Naive thymus-derived CD4-positive, alpha-beta T cell (primary cell): ENCODE measurements at regions of chr19 and their contacts with region 1.

Region 1: GRCh38 chr19:44051654-44052402 is at the start of gene ZNF223:
- DNase-seq: peak in 8 of 9 donors; percentile 14 to 52 (median 40)
- ATAC-seq: peak; percentile 85
- H3K4me3 ChIP-seq: peak within 1 kb of the TSS; percentile 58
- H3K4me3 Mint-ChIP-seq: peak within 1 kb of the TSS; percentile 71 to 98 (median 96)
- H3K27ac ChIP-seq: peak within 1 kb of the TSS; percentile 53
- H3K27ac Mint-ChIP-seq: peak within 1 kb of the TSS in 8 of 9 donors; percentile 36 to 91 (median 82)
- H3K4me1 ChIP-seq: no peaks in the 10 kb centered on the region
- H3K4me1 Mint-ChIP-seq: peaks cover 7 to 36% (median 28%) of the 10 kb centered on the region in 7 donors
- H3K27me3 ChIP-seq: no peaks in the 10 kb centered on the region
- H3K27me3 Mint-ChIP-seq: peaks cover 0 to 22% (median 13%) of the 10 kb centered on the region in 5 donors
- total RNA-seq, gene ZNF223: 0.15 to 8.7 (median 2.3) TPM

Region 2: GRCh38 chr19:43983912-43984686 is 67.7 kb before region 1 on chr19 and contains the start of gene ZNF155:
- CTCF ChIA-PET with region 1: no interaction called
- POLR2A ChIA-PET with region 1: interaction called, 3 read pairs
- intact Hi-C with region 1: loop called in 1 of 2 experiments (anchors 1 kb)
- DNase-seq: peak; percentile 46 to 72 (median 64)
- ATAC-seq: peak; percentile 92
- H3K4me3 ChIP-seq: peak within 1 kb of the TSS; percentile 96
- H3K4me3 Mint-ChIP-seq: peak within 1 kb of the TSS; percentile 89 to 99 (median 96)
- H3K27ac ChIP-seq: peak within 1 kb of the TSS; percentile 79
- H3K27ac Mint-ChIP-seq: peak within 1 kb of the TSS; percentile 72 to 97 (median 93)
- H3K4me1 ChIP-seq: peaks cover 0 to 3% of the 10 kb centered on the region in 2 donors
- H3K4me1 Mint-ChIP-seq: peaks cover 0 to 28% (median 14%) of the 10 kb centered on the region in 7 donors
- H3K27me3 ChIP-seq: no peaks in the 10 kb centered on the region
- H3K27me3 Mint-ChIP-seq: no peaks in the 10 kb centered on the region
- total RNA-seq, gene ZNF155: 5.2 to 13.3 (median 9.1) TPM

Region 3: GRCh38 chr19:44025217-44025936 is 26.5 kb before region 1 on chr19 and contains the start of gene ZNF222:
- CTCF ChIA-PET with region 1: no interaction called
- POLR2A ChIA-PET with region 1: interaction called, 5 read pairs
- intact Hi-C with region 1: loop called in 1 of 2 experiments (anchors 1 kb)
- DNase-seq: peak; percentile 41 to 78 (median 66)
- ATAC-seq: peak; percentile 99
- H3K4me3 ChIP-seq: peak within 1 kb of the TSS; percentile 76
- H3K4me3 Mint-ChIP-seq: peak within 1 kb of the TSS; percentile 95 to 100 (median 98)
- H3K27ac ChIP-seq: peak within 1 kb of the TSS; percentile 71
- H3K27ac Mint-ChIP-seq: peak within 1 kb of the TSS; percentile 84 to 98 (median 94)
- H3K4me1 ChIP-seq: peaks cover 5 to 9% of the 10 kb centered on the region in 2 donors
- H3K4me1 Mint-ChIP-seq: peaks cover 12 to 40% (median 31%) of the 10 kb centered on the region in 7 donors
- H3K27me3 ChIP-seq: no peaks in the 10 kb centered on the region
- H3K27me3 Mint-ChIP-seq: peaks cover 0 to 9% (median 3%) of the 10 kb centered on the region in 5 donors
- total RNA-seq, gene ZNF222: 2.9 to 10.1 (median 4.5) TPM

Region 4: DNA sequence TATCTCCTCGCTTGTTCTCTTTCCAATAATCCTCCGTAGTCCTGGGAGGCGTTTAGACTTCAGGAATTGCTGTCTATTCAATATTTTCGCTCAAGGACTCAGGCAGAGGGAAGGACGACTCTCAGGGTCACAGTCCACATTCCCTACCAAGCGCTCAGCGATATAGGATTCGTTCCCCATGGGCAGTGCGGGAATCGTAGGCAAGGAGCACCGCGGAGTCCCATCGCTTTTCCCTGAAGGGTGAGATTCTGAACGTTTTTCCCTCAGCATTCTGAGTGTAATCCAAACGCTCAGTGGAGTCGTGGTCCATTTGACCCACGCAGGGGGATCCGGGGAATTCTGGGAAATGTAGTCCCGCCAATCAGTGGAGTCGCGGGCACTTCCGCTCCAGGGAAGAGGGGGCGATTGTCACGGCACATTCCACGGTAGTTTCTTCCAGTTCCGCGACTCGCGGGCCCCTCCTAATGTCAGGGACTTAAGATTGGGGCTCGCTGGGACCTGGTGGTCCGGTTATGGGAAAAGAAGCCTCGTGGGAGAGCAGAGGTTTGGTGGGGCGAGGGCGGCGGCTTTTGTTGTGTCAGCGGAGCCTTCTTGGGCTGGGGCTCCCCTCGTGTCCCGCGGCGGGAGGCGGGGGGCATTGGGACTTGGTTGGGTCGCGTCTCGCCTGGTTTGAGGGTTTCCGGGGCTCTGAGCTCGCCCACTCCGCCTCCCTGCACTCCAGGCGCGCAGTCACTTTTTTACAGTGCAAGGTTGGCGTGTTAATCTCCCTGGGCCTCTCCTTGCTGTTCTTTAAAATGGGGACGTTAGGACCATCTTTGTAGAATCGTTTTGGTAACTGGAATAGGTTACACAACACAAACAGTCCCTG is 89.6 kb after region 1 on chr19 and contains the start of gene ZNF234:
- CTCF ChIA-PET with region 1: no interaction called
- POLR2A ChIA-PET with region 1: interaction called, 4 read pairs
- intact Hi-C with region 1: loop called in 1 of 2 experiments (anchors 1 kb)
- DNase-seq: peak; percentile 29 to 69 (median 56)
- ATAC-seq: peak; percentile 92
- H3K4me3 ChIP-seq: peak within 1 kb of the TSS; percentile 80
- H3K4me3 Mint-ChIP-seq: peak within 1 kb of the TSS; percentile 90 to 97 (median 96)
- H3K27ac ChIP-seq: peak within 1 kb of the TSS; percentile 77
- H3K27ac Mint-ChIP-seq: peak within 1 kb of the TSS; percentile 64 to 94 (median 88)
- H3K4me1 ChIP-seq: peaks cover 0 to 12% of the 10 kb centered on the region in 2 donors
- H3K4me1 Mint-ChIP-seq: peaks cover 14 to 30% (median 25%) of the 10 kb centered on the region in 7 donors
- H3K27me3 ChIP-seq: no peaks in the 10 kb centered on the region
- H3K27me3 Mint-ChIP-seq: no peaks in the 10 kb centered on the region
- total RNA-seq, gene ZNF234: 2.8 to 25.2 (median 13.4) TPM

Region 5: GRCh38 chr19:44164673-44165512 is 113.1 kb after region 1 on chr19 and contains the start of gene ZNF226:
- CTCF ChIA-PET with region 1: no interaction called
- POLR2A ChIA-PET with region 1: interaction called, 3 read pairs
- intact Hi-C with region 1: loop called in 1 of 2 experiments (anchors 2 kb)
- DNase-seq: peak; percentile 24 to 83 (median 75)
- ATAC-seq: peak; percentile 97
- H3K4me3 ChIP-seq: peak within 1 kb of the TSS; percentile 87
- H3K4me3 Mint-ChIP-seq: peak within 1 kb of the TSS; percentile 97 to 99 (median 98)
- H3K27ac ChIP-seq: peak within 1 kb of the TSS; percentile 78
- H3K27ac Mint-ChIP-seq: peak within 1 kb of the TSS; percentile 84 to 99 (median 97)
- H3K4me1 ChIP-seq: peaks cover 6 to 9% of the 10 kb centered on the region in 2 donors
- H3K4me1 Mint-ChIP-seq: peaks cover 10 to 40% (median 40%) of the 10 kb centered on the region in 7 donors
- H3K27me3 ChIP-seq: no peaks in the 10 kb centered on the region
- H3K27me3 Mint-ChIP-seq: no peaks in the 10 kb centered on the region
- total RNA-seq, gene ZNF226: 14.0 to 59.9 (median 20.3) TPM

Region 6: GRCh38 chr19:44207126-44207803 is 155.4 kb after region 1 on chr19:
- CTCF ChIA-PET with region 1: no interaction called
- POLR2A ChIA-PET with region 1: interaction called, 3 read pairs
- intact Hi-C with region 1: loop called in 1 of 2 experiments (anchors 1 kb)
- DNase-seq: peak; percentile 25 to 78 (median 70)
- ATAC-seq: peak; percentile 97
- H3K4me3 ChIP-seq: peak overlapping the region; percentile 79
- H3K4me3 Mint-ChIP-seq: peak overlapping the region; percentile 81 to 95 (median 87)
- H3K27ac ChIP-seq: peak overlapping the region; percentile 75
- H3K27ac Mint-ChIP-seq: peak overlapping the region; percentile 79 to 93 (median 84)
- H3K4me1 ChIP-seq: peaks cover 0 to 11% of the 10 kb centered on the region in 2 donors
- H3K4me1 Mint-ChIP-seq: peaks cover 7 to 15% (median 11%) of the 10 kb centered on the region in 7 donors
- H3K27me3 ChIP-seq: no peaks in the 10 kb centered on the region
- H3K27me3 Mint-ChIP-seq: peaks cover 0 to 22% (median 16%) of the 10 kb centered on the region in 5 donors

Region 7: DNA sequence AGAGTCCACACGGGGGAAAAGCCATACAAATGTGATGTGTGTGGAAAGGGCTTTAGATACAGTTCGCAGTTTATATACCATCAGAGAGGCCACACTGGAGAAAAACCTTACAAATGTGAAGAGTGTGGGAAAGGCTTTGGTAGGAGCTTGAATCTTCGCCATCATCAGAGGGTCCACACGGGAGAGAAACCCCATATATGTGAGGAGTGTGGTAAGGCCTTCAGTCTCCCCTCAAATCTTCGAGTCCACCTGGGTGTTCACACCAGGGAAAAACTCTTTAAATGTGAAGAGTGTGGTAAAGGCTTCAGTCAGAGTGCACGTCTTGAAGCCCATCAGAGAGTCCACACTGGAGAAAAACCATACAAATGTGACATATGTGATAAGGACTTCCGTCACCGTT is 184.6 kb after region 1 on chr19:
- CTCF ChIA-PET with region 1: no interaction called
- POLR2A ChIA-PET with region 1: no interaction called
- intact Hi-C with region 1: no loop called
- DNase-seq: no peak
- ATAC-seq: no peak
- H3K4me3 ChIP-seq: peak overlapping the region; percentile 21
- H3K4me3 Mint-ChIP-seq: no peak overlapping the region
- H3K27ac ChIP-seq: no peak overlapping the region
- H3K27ac Mint-ChIP-seq: no peak overlapping the region
- H3K4me1 ChIP-seq: no peaks in the 10 kb centered on the region
- H3K4me1 Mint-ChIP-seq: peaks cover 0 to 2% (median 0%) of the 10 kb centered on the region in 7 donors
- H3K27me3 ChIP-seq: no peaks in the 10 kb centered on the region
- H3K27me3 Mint-ChIP-seq: no peaks in the 10 kb centered on the region

Region 8: GRCh38 chr19:44500148-44500956 is 448.5 kb after region 1 on chr19 and contains the start of gene ZNF180:
- CTCF ChIA-PET with region 1: no interaction called
- POLR2A ChIA-PET with region 1: no interaction called
- intact Hi-C with region 1: loop called in 1 of 2 experiments (anchors 1 kb)
- DNase-seq: peak; percentile 89 to 96 (median 93)
- ATAC-seq: peak; percentile 96
- H3K4me3 ChIP-seq: peak within 1 kb of the TSS; percentile 100
- H3K4me3 Mint-ChIP-seq: peak within 1 kb of the TSS; percentile 91 to 98 (median 96)
- H3K27ac ChIP-seq: peak within 1 kb of the TSS; percentile 84
- H3K27ac Mint-ChIP-seq: peak within 1 kb of the TSS; percentile 82 to 94 (median 92)
- H3K4me1 ChIP-seq: peaks cover 13 to 19% of the 10 kb centered on the region in 2 donors
- H3K4me1 Mint-ChIP-seq: peaks cover 29 to 45% (median 34%) of the 10 kb centered on the region in 7 donors
- H3K27me3 ChIP-seq: peaks cover 0 to 2% of the 10 kb centered on the region in 2 donors
- H3K27me3 Mint-ChIP-seq: peaks cover 7 to 18% (median 13%) of the 10 kb centered on the region in 5 donors
- total RNA-seq, gene ZNF180: 7.5 to 17.7 (median 10.6) TPM